GM12878 (cell line): ENCODE measurements at regions of chr5 and their contacts with region 1.

Region 1: DNA sequence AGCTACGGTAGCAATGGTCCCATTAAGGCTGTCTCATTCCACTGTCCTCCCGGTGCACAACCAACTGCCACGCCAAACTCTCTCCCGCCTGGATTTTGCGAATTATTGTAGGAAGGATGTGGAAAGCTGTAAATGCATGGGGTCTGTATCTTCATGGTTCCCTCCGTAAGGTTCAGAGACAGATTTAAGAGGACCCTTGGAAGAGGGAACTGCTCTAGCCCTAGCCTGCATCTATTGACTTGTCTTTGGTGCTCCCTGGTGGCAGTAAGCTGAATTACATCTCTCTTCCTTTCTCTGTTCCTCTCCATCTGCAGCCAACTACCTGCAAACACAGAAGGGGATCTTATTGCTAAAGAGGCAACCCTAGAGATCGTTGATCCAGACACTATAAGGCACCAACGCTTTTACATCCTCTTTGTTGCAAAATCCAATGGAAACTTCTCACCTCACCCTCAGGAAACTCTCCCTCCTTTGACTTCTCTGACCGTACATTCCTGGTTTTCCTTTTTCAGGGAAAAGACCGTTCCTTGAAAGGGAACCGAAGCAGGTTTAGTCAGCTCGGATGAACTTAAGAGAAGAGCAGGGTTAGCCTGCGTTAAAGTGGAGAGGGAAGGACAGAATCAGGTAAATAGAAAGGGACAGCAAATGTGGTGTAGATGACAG is 11.9 kb downstream of the CAPSL start:
- DNase-seq: no peak
- ATAC-seq: peak; percentile 78
- H3K4me3 ChIP-seq: no peak overlapping the region
- H3K27ac ChIP-seq: no peak overlapping the region
- H3K4me1 ChIP-seq: peaks cover 4% of the 10 kb centered on the region; the same call in 1 of the 2 replicates
- H3K27me3 ChIP-seq: peaks cover 0 to 3% of the 10 kb centered on the region in 2 experiments; a peak in 2 of 4 replicates
- CTCF ChIP-seq: peak; percentile 76 to 87 (median 87)
- EP300 ChIP-seq: no peak
- POLR2A ChIP-seq: no peak
- RAD21 ChIP-seq: peak; percentile 93

Region 2: GRCh38 chr5:35089334-35090314 is 836.9 kb before region 1 on chr5:
- CTCF ChIA-PET with region 1: interaction called, 10 read pairs
- POLR2A ChIA-PET with region 1: interaction called, 3 read pairs
- RAD21 ChIA-PET with region 1: interaction called, 8 read pairs
- SMC1A ChIA-PET with region 1: interaction called, 4 read pairs
- in situ Hi-C with region 1: loop called (anchors 5 kb)
- intact Hi-C with region 1: loop called (anchors 2 kb)
- DNase-seq: peak; percentile 28
- ATAC-seq: peak; percentile 92
- H3K4me3 ChIP-seq: no peak overlapping the region
- H3K27ac ChIP-seq: no peak overlapping the region
- H3K4me1 ChIP-seq: no peaks in the 10 kb centered on the region
- H3K27me3 ChIP-seq: no peaks in the 10 kb centered on the region
- CTCF ChIP-seq: peak; percentile 75 to 90 (median 78); a peak in 5 of 6 replicates
- EP300 ChIP-seq: no peak
- POLR2A ChIP-seq: no peak
- RAD21 ChIP-seq: peak; percentile 94

Region 3: DNA sequence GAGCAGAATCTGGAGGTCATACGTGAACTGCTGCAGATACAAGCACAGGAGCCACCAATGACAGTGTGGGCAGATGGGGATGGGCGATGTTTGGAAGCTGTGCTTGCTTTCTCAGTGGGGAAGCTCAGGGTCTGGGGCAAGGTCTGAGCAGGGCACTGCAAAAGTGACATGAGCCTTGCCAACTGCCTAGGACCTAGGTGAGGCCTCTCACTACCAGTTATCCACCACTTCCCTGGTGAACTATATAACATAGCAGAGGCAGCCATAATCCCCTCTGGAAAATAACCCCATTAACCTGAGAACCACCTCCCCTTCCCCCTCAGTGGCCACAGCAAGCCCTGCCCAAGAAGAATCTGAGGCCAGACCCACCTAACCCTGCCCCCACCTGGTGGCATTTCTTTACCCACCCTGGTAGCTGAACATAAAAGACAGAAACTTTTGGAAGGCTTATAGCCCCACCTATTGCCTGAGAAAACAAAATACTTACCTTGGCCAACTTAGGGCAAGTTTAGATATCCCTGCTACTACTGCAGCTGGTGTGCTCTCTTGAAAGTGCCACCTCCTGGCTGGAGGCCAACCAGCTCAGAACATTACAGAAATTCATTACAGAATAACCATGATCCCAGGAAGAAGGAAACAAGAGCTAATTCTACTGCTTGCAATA is 327.7 kb before region 1 on chr5:
- CTCF ChIA-PET with region 1: interaction called, 10 read pairs
- POLR2A ChIA-PET with region 1: no interaction called
- RAD21 ChIA-PET with region 1: interaction called, 3 read pairs
- SMC1A ChIA-PET with region 1: interaction called, 3 read pairs
- in situ Hi-C with region 1: no loop called
- intact Hi-C with region 1: no loop called
- DNase-seq: no peak
- ATAC-seq: peak; percentile 87
- H3K4me3 ChIP-seq: no peak overlapping the region
- H3K27ac ChIP-seq: no peak overlapping the region
- H3K4me1 ChIP-seq: no peaks in the 10 kb centered on the region
- H3K27me3 ChIP-seq: no peaks in the 10 kb centered on the region
- CTCF ChIP-seq: peak in 2 of 3 experiments; percentile 21 to 41; a peak in 2 of 6 replicates
- EP300 ChIP-seq: no peak
- POLR2A ChIP-seq: no peak
- RAD21 ChIP-seq: peak; percentile 29; the same call in 1 of the 2 replicates

Region 4: GRCh38 chr5:35771309-35771708 is 155.2 kb before region 1 on chr5:
- CTCF ChIA-PET with region 1: interaction called, 359 read pairs
- POLR2A ChIA-PET with region 1: no interaction called
- RAD21 ChIA-PET with region 1: interaction called, 128 read pairs
- SMC1A ChIA-PET with region 1: interaction called, 276 read pairs
- in situ Hi-C with region 1: loop called (anchors 5 kb)
- intact Hi-C with region 1: no loop called
- DNase-seq: no peak
- ATAC-seq: no peak
- H3K4me3 ChIP-seq: no peak overlapping the region
- H3K27ac ChIP-seq: no peak overlapping the region
- H3K4me1 ChIP-seq: no peaks in the 10 kb centered on the region
- H3K27me3 ChIP-seq: peaks cover 0 to 4% of the 10 kb centered on the region in 2 experiments; a peak in 2 of 4 replicates
- CTCF ChIP-seq: no peak
- EP300 ChIP-seq: no peak
- POLR2A ChIP-seq: no peak
- RAD21 ChIP-seq: no peak

Region 5: GRCh38 chr5:35794684-35795375 is 131.7 kb before region 1 on chr5:
- CTCF ChIA-PET with region 1: interaction called, 24 read pairs
- POLR2A ChIA-PET with region 1: no interaction called
- RAD21 ChIA-PET with region 1: interaction called, 7 read pairs
- SMC1A ChIA-PET with region 1: interaction called, 4 read pairs
- in situ Hi-C with region 1: no loop called
- intact Hi-C with region 1: no loop called
- DNase-seq: no peak
- ATAC-seq: no peak
- H3K4me3 ChIP-seq: no peak overlapping the region
- H3K27ac ChIP-seq: no peak overlapping the region
- H3K4me1 ChIP-seq: no peaks in the 10 kb centered on the region
- H3K27me3 ChIP-seq: no peaks in the 10 kb centered on the region
- CTCF ChIP-seq: no peak
- EP300 ChIP-seq: no peak
- POLR2A ChIP-seq: no peak
- RAD21 ChIP-seq: no peak

Region 6: DNA sequence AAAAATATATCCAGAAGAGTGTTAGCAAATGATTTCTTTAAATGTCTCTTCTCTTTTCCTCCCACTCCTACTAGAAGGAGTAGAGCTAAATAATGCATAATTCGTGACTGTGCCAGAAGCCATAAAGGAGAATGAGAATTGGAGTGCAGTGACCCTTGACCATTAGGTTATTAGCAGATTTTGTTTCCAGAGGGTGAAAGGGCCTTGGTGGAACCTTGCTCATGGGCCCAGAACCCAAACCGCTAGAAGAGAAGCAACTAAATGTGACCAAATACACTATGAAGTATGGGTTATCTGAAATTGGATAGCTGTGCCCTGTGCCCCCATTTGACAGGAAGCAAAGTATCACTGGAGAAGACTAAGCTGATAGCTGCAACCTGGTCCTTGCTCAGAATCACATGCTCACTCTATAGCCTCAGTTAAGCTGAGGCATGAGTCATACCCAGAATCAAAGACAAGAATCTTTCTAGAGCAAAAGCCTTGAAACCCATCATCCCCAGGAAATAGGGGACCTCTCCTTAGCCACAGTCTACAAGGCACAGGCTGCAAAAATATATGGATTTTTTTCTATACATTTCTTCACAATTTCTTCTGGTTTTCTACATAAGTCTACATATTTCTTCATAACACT is 24.4 kb before region 1 on chr5:
- CTCF ChIA-PET with region 1: interaction called, 13 read pairs
- POLR2A ChIA-PET with region 1: no interaction called
- RAD21 ChIA-PET with region 1: interaction called, 9 read pairs
- SMC1A ChIA-PET with region 1: interaction called, 36 read pairs
- in situ Hi-C with region 1: no loop called
- intact Hi-C with region 1: no loop called
- DNase-seq: no peak
- ATAC-seq: peak; percentile 71
- H3K4me3 ChIP-seq: no peak overlapping the region
- H3K27ac ChIP-seq: peak overlapping the region; percentile 66
- H3K4me1 ChIP-seq: peaks cover 52% of the 10 kb centered on the region
- H3K27me3 ChIP-seq: no peaks in the 10 kb centered on the region
- CTCF ChIP-seq: no peak
- EP300 ChIP-seq: no peak
- POLR2A ChIP-seq: no peak
- RAD21 ChIP-seq: no peak